Calu3 (cell line): ENCODE measurements at regions of chr5 and their contacts with region 1.

Region 1: DNA sequence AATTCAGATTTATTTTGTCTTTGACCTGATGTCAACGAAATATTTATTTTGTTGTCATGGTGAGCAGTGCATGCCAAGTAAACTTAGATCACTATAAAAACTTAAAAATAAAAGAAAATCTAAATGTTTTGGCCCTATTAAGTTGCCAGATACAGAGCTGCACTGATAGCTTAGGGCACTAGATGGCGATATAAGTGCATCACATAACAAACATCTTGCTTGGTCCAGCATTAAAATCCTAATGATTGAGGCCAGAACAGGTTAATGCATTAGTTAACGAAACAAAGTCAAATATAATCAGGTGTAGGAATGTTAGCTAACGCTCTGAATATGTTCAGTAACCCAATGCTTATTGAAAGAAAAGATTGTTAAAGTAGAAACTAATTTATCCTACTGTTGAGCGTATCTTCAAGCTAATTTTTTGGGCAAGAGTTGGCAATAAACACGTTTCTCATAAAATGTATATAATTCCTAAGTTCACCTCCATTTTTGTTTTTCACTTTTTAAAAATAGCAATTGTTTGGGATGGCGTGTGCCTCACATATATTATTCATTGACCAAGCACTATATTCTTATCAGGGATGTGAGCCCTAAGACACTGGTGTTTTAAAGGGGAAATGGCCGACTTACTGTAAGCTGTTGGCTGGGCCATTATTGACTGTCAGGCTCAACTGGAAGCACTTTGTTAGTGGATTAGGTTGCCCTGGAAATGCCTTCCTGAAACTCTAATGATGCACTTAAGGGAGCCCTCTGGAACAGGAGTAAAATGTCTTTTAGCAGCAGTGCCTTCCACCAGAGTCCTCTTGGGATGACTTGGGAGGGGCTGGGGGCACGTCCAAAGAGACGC is 33.3 kb downstream of the KCTD16 start:
- DNase-seq: peak; percentile 56
- H3K4me3 Mint-ChIP-seq: peak overlapping the region; percentile 38
- H3K27ac Mint-ChIP-seq: no peak overlapping the region
- H3K4me1 Mint-ChIP-seq: no peaks in the 10 kb centered on the region
- H3K27me3 Mint-ChIP-seq: peaks cover 84% of the 10 kb centered on the region
- CTCF ChIP-seq: peak; percentile 77

Region 2: GRCh38 chr5:144390133-144390532 is 186.2 kb after region 1 on chr5:
- CTCF ChIA-PET with region 1: no interaction called
- intact Hi-C with region 1: loop called (anchors 1 kb)
- DNase-seq: peak; percentile 3
- H3K4me3 Mint-ChIP-seq: no peak overlapping the region
- H3K27ac Mint-ChIP-seq: no peak overlapping the region
- H3K4me1 Mint-ChIP-seq: no peaks in the 10 kb centered on the region
- H3K27me3 Mint-ChIP-seq: no peaks in the 10 kb centered on the region
- CTCF ChIP-seq: no peak

Region 3: GRCh38 chr5:145220481-145220880 is 1016.5 kb after region 1 on chr5:
- CTCF ChIA-PET with region 1: no interaction called
- intact Hi-C with region 1: loop called (anchors 5 kb)
- DNase-seq: peak; percentile 45
- H3K4me3 Mint-ChIP-seq: no peak overlapping the region
- H3K27ac Mint-ChIP-seq: no peak overlapping the region
- H3K4me1 Mint-ChIP-seq: peaks cover 13% of the 10 kb centered on the region
- H3K27me3 Mint-ChIP-seq: no peaks in the 10 kb centered on the region
- CTCF ChIP-seq: no peak

Region 4: DNA sequence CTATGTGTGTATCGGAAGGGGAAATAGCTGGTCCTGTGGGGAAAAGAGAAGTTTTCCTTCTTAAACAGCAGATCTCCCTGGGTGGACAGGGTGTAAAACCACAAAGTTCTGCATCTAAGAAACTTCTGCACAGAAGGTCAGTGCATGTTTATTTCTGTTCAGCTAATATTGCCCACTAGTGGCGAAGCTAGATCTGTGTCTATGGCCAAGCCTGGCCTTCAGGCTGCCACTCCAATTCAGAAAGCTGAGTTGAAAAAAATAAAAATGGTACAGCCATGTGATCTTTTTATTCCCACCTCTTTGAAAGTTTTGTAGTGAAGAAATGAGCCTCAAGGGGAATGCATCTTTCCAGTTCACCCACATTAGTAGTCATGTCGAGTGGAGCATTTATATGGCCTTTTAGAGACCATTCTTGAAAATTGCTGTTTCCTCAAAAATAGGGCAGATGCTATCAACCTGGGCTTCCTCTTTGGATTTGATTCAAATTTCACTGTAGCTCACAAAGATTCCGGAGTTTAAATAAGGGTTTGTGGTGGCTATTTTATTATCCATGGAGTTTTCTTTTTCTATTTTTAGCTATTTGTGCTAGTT is 1143.1 kb after region 1 on chr5:
- CTCF ChIA-PET with region 1: no interaction called
- intact Hi-C with region 1: loop called (anchors 5 kb)
- DNase-seq: peak; percentile 43
- H3K4me3 Mint-ChIP-seq: no peak overlapping the region
- H3K27ac Mint-ChIP-seq: no peak overlapping the region
- H3K4me1 Mint-ChIP-seq: no peaks in the 10 kb centered on the region
- H3K27me3 Mint-ChIP-seq: no peaks in the 10 kb centered on the region
- CTCF ChIP-seq: peak; percentile 49

Region 5: DNA sequence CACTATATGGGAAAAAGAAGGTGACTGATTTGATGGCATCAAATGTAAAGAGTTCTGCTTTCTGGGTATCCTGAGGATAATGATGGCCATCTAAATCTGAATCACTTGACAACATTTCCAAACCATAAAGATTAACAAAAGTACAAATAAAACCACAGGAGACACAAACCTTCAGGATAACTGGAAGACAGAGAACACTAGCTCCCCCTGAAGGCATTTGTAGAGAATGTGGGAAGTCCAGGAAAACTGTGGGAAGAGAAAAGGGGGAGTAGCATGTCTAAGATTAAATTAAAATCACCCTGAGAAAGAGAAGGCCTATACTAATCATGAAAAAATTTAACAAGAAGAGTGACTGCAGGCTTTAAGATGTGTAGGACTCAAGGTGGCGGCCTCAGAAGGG is 1515.0 kb after region 1 on chr5:
- CTCF ChIA-PET with region 1: interaction called, 3 read pairs
- intact Hi-C with region 1: loop called (anchors 10 kb)
- DNase-seq: peak; percentile 15
- H3K4me3 Mint-ChIP-seq: no peak overlapping the region
- H3K27ac Mint-ChIP-seq: no peak overlapping the region
- H3K4me1 Mint-ChIP-seq: no peaks in the 10 kb centered on the region
- H3K27me3 Mint-ChIP-seq: no peaks in the 10 kb centered on the region
- CTCF ChIP-seq: peak; percentile 39

Region 6: DNA sequence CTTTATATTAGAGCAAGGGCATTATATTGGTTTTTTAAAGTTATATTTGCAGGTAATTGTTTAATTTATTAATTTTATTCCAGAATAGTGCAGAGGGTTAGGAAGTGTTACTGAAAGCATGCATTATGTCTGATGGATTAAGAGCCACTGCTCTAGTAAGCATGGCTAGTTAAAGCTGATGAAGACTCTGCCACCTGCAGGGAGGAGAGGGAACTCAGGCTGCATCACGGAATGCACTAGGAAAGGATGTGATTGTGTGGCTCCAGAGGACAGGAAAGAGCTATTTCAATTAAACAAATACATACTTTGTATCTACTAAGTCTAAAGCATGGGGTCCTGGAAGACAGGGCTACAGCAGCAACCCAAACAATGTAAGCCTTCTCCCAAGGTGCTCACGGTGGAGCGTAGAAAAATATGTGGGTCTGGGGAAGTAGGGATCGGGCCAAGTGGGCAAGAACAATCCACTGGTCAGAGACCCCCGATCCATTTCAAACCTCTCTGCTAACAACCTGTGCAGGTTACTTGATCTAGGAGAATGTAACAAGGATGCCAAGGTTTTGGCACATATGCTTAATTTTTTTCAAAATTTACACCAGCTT is 1684.1 kb after region 1 on chr5:
- CTCF ChIA-PET with region 1: interaction called, 9 read pairs
- intact Hi-C with region 1: loop called (anchors 5 kb)
- DNase-seq: peak; percentile 72
- H3K4me3 Mint-ChIP-seq: no peak overlapping the region
- H3K27ac Mint-ChIP-seq: no peak overlapping the region
- H3K4me1 Mint-ChIP-seq: no peaks in the 10 kb centered on the region
- H3K27me3 Mint-ChIP-seq: no peaks in the 10 kb centered on the region
- CTCF ChIP-seq: peak; percentile 74

Region 7: GRCh38 chr5:146130440-146131045 is 1926.6 kb after region 1 on chr5:
- CTCF ChIA-PET with region 1: no interaction called
- intact Hi-C with region 1: loop called (anchors 1 kb)
- DNase-seq: no peak
- H3K4me3 Mint-ChIP-seq: no peak overlapping the region
- H3K27ac Mint-ChIP-seq: no peak overlapping the region
- H3K4me1 Mint-ChIP-seq: no peaks in the 10 kb centered on the region
- H3K27me3 Mint-ChIP-seq: no peaks in the 10 kb centered on the region
- CTCF ChIP-seq: peak; percentile 54